HepG2 (cell line): ENCODE measurements at regions of chr17 and their contacts with region 1.

Region 1: GRCh38 chr17:55527540-55528118 is 16.4 kb upstream of the SMIM36 start:
- DNase-seq: peak; percentile 39
- ATAC-seq: peak; percentile 65
- H3K4me3 ChIP-seq: no peak overlapping the region
- H3K27ac ChIP-seq: no peak overlapping the region
- H3K4me1 ChIP-seq: no peaks in the 10 kb centered on the region
- H3K27me3 ChIP-seq: peaks cover 0 to 4% of the 10 kb centered on the region in 2 experiments; a peak in 1 of 5 replicates
- CTCF ChIP-seq: peak; percentile 72
- EP300 ChIP-seq: no peak
- POLR2A ChIP-seq: no peak
- RAD21 ChIP-seq: peak; percentile 31; the same call in 1 of the 2 replicates

Region 2: DNA sequence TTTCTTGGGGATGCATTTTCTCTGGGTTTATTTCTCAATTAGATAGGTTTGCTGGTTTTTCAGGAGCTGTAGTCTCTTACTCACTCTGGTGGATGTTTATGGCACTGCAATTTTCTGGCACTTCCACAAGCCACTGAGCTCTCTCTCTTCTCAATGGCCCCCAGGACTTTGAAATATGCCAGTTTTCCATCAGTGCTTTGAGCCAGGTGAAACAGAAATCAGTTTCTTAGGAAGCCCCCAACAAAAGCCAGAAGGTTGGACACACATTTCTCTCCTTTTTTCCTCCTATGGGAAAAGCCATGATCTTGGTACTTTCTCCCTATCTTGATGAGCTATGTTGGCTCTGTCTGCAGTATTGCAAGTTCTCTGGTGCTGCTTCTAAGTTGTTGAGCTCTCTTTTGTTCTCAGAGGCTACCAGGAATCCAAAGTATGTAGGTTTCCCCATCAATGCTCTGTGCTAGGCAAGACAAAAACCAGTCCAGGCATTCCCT is 74.3 kb after region 1 on chr17:
- CTCF ChIA-PET with region 1: interaction called, 34 read pairs
- POLR2A ChIA-PET with region 1: no interaction called
- in situ Hi-C with region 1: loop called (anchors 5 kb)
- intact Hi-C with region 1: loop called (anchors 1 kb)
- DNase-seq: peak; percentile 39
- ATAC-seq: peak; percentile 89
- H3K4me3 ChIP-seq: no peak overlapping the region
- H3K27ac ChIP-seq: no peak overlapping the region
- H3K4me1 ChIP-seq: no peaks in the 10 kb centered on the region
- H3K27me3 ChIP-seq: no peaks in the 10 kb centered on the region
- CTCF ChIP-seq: peak; percentile 71
- EP300 ChIP-seq: no peak
- POLR2A ChIP-seq: no peak
- RAD21 ChIP-seq: peak; percentile 55; the same call in 1 of the 2 replicates

Region 3: DNA sequence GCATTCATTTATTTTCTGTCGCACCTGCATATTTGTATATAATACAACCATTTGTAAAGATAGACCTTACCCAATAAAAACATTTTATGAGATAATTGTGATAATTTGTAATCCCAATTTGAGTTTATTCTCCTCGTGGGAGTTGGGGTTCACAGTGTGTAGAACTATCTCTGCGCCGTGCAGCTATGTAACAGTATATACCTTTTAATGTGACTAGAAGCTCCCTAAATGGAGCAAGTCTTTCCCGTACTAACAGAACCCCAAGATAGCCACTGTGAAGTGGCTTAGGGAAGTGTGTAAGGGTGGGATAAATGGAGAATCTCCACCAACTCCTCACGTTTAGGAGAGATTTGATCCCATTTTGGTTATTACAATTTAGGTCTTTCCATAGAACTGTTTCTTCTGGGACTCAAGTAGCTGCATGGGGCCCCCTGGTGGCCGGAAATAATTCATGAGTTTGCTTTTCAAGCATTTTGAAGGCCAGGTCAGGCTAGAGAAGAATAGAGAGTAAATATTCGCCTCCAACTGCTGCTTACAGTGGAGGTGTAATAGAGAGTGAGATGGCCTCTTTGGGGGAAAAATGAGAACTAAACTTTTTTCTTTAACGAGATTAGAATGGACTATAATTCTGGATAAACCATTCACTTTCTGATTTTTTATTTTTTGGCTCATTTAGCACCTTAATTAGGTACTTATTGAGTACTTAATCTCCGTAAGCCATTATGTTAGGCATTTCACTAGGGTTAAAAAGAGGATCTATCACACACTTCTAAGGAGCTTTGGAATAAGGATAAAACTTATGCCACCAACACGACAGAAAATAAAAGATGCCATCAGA is 190.5 kb after region 1 on chr17:
- CTCF ChIA-PET with region 1: interaction called, 28 read pairs
- POLR2A ChIA-PET with region 1: no interaction called
- in situ Hi-C with region 1: loop called (anchors 5 kb)
- intact Hi-C with region 1: loop called (anchors 1 kb)
- DNase-seq: peak; percentile 78
- ATAC-seq: peak; percentile 86
- H3K4me3 ChIP-seq: no peak overlapping the region
- H3K27ac ChIP-seq: no peak overlapping the region
- H3K4me1 ChIP-seq: no peaks in the 10 kb centered on the region
- H3K27me3 ChIP-seq: peaks cover 0 to 41% of the 10 kb centered on the region in 2 experiments; a peak in 3 of 5 replicates
- CTCF ChIP-seq: peak; percentile 74
- EP300 ChIP-seq: no peak
- POLR2A ChIP-seq: no peak
- RAD21 ChIP-seq: 0 out of 2 replicates have a peak, but pooled peaks have one; percentile 24

Region 4: GRCh38 chr17:55770148-55770870 is 242.7 kb after region 1 on chr17:
- CTCF ChIA-PET with region 1: interaction called, 45 read pairs
- POLR2A ChIA-PET with region 1: no interaction called
- in situ Hi-C with region 1: loop called (anchors 5 kb)
- intact Hi-C with region 1: loop called (anchors 1 kb)
- DNase-seq: peak; percentile 68
- ATAC-seq: peak; percentile 67
- H3K4me3 ChIP-seq: no peak overlapping the region
- H3K27ac ChIP-seq: no peak overlapping the region
- H3K4me1 ChIP-seq: peaks cover 26% of the 10 kb centered on the region
- H3K27me3 ChIP-seq: no peaks in the 10 kb centered on the region
- CTCF ChIP-seq: peak; percentile 66
- EP300 ChIP-seq: no peak
- POLR2A ChIP-seq: no peak
- RAD21 ChIP-seq: peak; percentile 79

Region 5: GRCh38 chr17:55852734-55853133 is 325.1 kb after region 1 on chr17:
- CTCF ChIA-PET with region 1: no interaction called
- POLR2A ChIA-PET with region 1: no interaction called
- in situ Hi-C with region 1: no loop called
- intact Hi-C with region 1: no loop called
- DNase-seq: no peak
- ATAC-seq: no peak
- H3K4me3 ChIP-seq: no peak overlapping the region
- H3K27ac ChIP-seq: no peak overlapping the region
- H3K4me1 ChIP-seq: no peaks in the 10 kb centered on the region
- H3K27me3 ChIP-seq: no peaks in the 10 kb centered on the region
- CTCF ChIP-seq: no peak
- EP300 ChIP-seq: no peak
- POLR2A ChIP-seq: no peak
- RAD21 ChIP-seq: no peak

Region 6: DNA sequence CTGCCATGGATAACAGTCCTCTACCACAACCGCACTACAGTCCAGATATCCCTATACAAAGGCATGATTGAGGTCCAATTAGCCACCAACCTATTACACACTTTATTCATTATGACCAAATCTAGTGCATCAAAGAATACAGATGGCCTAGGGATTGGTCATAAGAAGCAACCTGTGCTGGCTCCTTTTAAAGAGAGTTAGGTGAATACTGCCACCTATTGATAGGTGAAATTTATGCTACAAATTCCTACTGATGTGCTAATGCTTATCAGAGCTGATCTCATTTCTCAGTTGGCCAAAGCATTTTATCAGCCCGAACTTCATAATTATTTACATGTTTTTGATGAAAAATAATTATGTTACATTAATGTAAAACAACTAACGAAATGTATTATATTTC is 791.9 kb after region 1 on chr17:
- CTCF ChIA-PET with region 1: interaction called, 3 read pairs
- POLR2A ChIA-PET with region 1: no interaction called
- in situ Hi-C with region 1: no loop called
- intact Hi-C with region 1: loop called (anchors 1 kb)
- DNase-seq: peak; percentile 58
- ATAC-seq: peak; percentile 86
- H3K4me3 ChIP-seq: no peak overlapping the region
- H3K27ac ChIP-seq: no peak overlapping the region
- H3K4me1 ChIP-seq: no peaks in the 10 kb centered on the region
- H3K27me3 ChIP-seq: peaks cover 0 to 5% of the 10 kb centered on the region in 2 experiments; a peak in 2 of 5 replicates
- CTCF ChIP-seq: peak; percentile 75
- EP300 ChIP-seq: no peak
- POLR2A ChIP-seq: no peak
- RAD21 ChIP-seq: 0 out of 2 replicates have a peak, but pooled peaks have one; percentile 30